Endothelial cell of umbilical vein (primary cell): ENCODE measurements at regions of chr15 and their contacts with region 1.

Region 1: DNA sequence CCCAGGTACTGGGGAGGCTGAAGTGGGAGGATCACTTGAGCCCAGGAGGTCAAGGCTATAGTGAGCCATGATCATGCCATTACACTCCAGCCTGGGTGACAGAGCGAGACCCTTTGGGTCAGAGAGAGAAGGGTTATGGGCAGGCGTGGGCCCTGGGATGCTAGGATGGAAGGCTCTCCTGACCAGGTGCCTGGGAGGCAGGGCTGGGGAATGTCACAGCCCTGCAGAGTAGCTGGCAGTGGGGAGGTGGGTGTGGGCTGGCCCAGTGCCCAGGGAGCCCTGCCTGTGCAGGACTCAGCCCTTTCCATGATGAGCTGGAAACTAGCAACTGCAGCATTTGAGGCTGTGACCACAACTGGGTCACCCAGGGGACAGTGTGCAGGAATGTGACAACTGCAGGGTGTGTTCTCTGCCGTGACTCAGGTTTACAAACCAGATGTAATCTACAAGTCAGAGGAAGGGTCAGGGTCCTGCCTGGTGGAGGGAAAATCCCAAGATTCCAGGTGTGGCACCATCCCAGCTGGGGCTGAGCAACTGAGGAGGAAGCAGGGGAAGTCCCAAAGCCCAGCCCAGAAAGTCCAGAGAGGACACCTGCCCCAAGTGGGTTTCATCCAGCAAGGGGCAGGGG is 45.4 kb downstream of the SLC28A1 start:
- DNase-seq: no peak
- H3K4me3 ChIP-seq: no peak overlapping the region
- H3K27ac ChIP-seq: no peak overlapping the region
- H3K4me1 ChIP-seq: no peaks in the 10 kb centered on the region
- H3K27me3 ChIP-seq: no peaks in the 10 kb centered on the region
- CTCF ChIP-seq: no peak
- POLR2A ChIP-seq: no peak

Region 2: GRCh38 chr15:84600851-84601838 is 328.7 kb before region 1 on chr15 and contains the start of gene ZSCAN2:
- CTCF ChIA-PET with region 1: interaction called, 30 read pairs
- POLR2A ChIA-PET with region 1: interaction called, 3 read pairs
- dilution Hi-C with region 1: no loop called
- intact Hi-C with region 1: loop called (anchors 1 kb)
- DNase-seq: peak; percentile 96
- H3K4me3 ChIP-seq: peak within 1 kb of the TSS; percentile 46 to 66 (median 54)
- H3K27ac ChIP-seq: peak within 1 kb of the TSS; percentile 56
- H3K4me1 ChIP-seq: no peaks in the 10 kb centered on the region
- H3K27me3 ChIP-seq: no peaks in the 10 kb centered on the region
- CTCF ChIP-seq: peak in 1 of 2 donors; percentile 10
- POLR2A ChIP-seq: peak; percentile 56
- total RNA-seq, gene ZSCAN2: 13.5 TPM in 2 replicates

Region 3: GRCh38 chr15:84716036-84716799 is 213.6 kb before region 1 on chr15 and contains the start of gene SEC11A:
- CTCF ChIA-PET with region 1: interaction called, 3 read pairs
- POLR2A ChIA-PET with region 1: no interaction called
- dilution Hi-C with region 1: no loop called
- intact Hi-C with region 1: loop called (anchors 1 kb)
- DNase-seq: peak; percentile 97
- H3K4me3 ChIP-seq: peak within 1 kb of the TSS; percentile 55 to 95 (median 85)
- H3K27ac ChIP-seq: peak within 1 kb of the TSS; percentile 56
- H3K4me1 ChIP-seq: peaks cover 22% of the 10 kb centered on the region
- H3K27me3 ChIP-seq: no peaks in the 10 kb centered on the region
- CTCF ChIP-seq: no peak
- POLR2A ChIP-seq: peak; percentile 97
- total RNA-seq, gene SEC11A: 192 and 204 TPM in 2 replicates

Region 4: GRCh38 chr15:84844964-84845363 is 84.9 kb before region 1 on chr15:
- CTCF ChIA-PET with region 1: interaction called, 44 read pairs
- POLR2A ChIA-PET with region 1: no interaction called
- dilution Hi-C with region 1: no loop called
- intact Hi-C with region 1: loop called (anchors 1 kb)
- DNase-seq: no peak
- H3K4me3 ChIP-seq: no peak overlapping the region
- H3K27ac ChIP-seq: no peak overlapping the region
- H3K4me1 ChIP-seq: no peaks in the 10 kb centered on the region
- H3K27me3 ChIP-seq: no peaks in the 10 kb centered on the region
- CTCF ChIP-seq: no peak
- POLR2A ChIP-seq: no peak

Region 5: GRCh38 chr15:84871428-84872305 is 58.2 kb before region 1 on chr15:
- CTCF ChIA-PET with region 1: interaction called, 15 read pairs
- POLR2A ChIA-PET with region 1: no interaction called
- dilution Hi-C with region 1: no loop called
- intact Hi-C with region 1: no loop called
- DNase-seq: no peak
- H3K4me3 ChIP-seq: no peak overlapping the region
- H3K27ac ChIP-seq: no peak overlapping the region
- H3K4me1 ChIP-seq: no peaks in the 10 kb centered on the region
- H3K27me3 ChIP-seq: no peaks in the 10 kb centered on the region
- CTCF ChIP-seq: no peak
- POLR2A ChIP-seq: no peak

Region 6: DNA sequence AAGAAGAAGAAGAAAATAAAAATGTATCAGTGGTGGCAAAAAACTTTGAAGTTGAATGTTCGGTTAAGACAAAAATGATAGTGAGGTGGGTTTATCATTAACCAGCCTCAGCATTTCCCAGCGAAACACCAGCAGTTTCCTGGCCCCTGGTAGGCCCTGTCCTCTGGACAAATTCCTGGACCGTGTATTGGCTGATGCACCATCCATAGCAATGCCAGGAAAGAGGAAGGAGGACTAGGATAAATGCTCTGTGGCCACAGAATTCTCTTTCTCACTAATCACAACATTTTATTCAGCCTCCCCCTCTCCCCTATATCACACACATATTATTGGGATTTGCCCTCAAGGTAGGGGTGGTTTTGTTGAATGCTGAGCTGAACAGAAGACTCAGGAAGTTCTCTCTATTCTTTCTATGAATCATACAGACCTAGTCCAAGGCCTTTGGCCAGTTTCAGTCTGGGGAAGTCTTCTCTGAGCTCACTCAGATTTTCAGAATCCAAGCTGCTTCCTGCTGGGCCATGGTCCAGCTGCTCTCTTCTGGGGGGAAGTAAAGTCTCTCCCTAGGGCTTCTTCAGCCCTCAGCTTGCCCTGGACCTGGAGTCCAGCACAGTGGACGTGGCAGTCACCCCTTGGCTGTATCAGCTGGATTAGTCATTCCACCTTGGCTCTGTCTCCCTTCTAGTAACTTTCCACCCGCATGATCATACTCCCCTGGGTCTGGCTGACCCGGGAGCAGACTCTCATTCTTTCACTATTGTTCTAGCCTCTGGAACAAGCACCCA is 17.8 kb before region 1 on chr15:
- CTCF ChIA-PET with region 1: interaction called, 38 read pairs
- POLR2A ChIA-PET with region 1: interaction called, 8 read pairs
- dilution Hi-C with region 1: no loop called
- intact Hi-C with region 1: no loop called
- DNase-seq: peak; percentile 99
- H3K4me3 ChIP-seq: no peak overlapping the region
- H3K27ac ChIP-seq: peak overlapping the region; percentile 99
- H3K4me1 ChIP-seq: peaks cover 34% of the 10 kb centered on the region
- H3K27me3 ChIP-seq: no peaks in the 10 kb centered on the region
- CTCF ChIP-seq: no peak
- POLR2A ChIP-seq: peak; percentile 66

Region 7: DNA sequence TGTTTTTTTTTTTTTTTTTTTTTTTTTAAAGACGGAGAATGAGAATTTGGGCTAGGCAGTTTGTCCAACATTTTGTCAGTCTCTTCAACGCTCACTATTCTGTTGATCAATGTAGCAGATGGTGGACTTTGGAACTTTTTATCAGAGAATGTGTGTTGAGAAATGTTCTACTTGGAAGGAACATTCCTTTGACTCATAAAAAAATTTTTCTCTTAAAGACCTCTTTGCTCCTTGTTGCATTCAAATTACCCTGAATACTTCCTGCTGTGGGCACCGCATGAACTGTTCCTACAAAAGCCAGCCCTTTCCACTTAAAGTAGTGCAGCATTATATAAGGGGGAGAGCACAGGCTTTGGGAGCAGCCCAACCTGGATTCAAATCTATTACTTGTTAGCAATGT is 633.5 kb after region 1 on chr15:
- CTCF ChIA-PET with region 1: no interaction called
- POLR2A ChIA-PET with region 1: no interaction called
- dilution Hi-C with region 1: no loop called
- intact Hi-C with region 1: no loop called
- DNase-seq: no peak
- H3K4me3 ChIP-seq: no peak overlapping the region
- H3K27ac ChIP-seq: no peak overlapping the region
- H3K4me1 ChIP-seq: no peaks in the 10 kb centered on the region
- H3K27me3 ChIP-seq: no peaks in the 10 kb centered on the region
- CTCF ChIP-seq: no peak
- POLR2A ChIP-seq: no peak